ENCODE measurements at regions of chr10 and their contacts with region 1.

Region 1: DNA sequence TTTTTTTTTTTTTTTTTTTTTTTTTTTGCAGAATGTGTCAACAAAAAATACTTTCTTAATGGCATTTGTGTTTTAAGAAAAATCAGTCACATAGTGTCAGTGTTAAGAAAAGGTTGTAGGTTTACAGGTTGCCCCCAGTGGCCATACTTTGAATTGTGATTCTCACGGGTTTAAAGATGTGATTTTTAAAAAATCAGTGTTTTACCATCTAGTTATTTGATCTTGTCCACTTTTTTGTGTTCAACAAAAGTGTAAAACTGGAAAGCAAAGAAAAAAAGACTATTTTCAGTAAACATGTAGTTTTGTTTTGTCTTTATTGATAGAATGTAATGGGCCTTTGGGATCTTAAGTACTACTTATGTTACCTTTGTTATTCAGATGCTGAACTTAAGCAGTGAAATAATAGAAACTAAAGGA is 25.7 kb downstream of the SUV39H2 start:
- DNase-seq: peak; percentile 49
- ATAC-seq: peak; percentile 64
- H3K4me3 Mint-ChIP-seq: no peak overlapping the region
- H3K27ac Mint-ChIP-seq: no peak overlapping the region
- H3K4me1 Mint-ChIP-seq: peaks cover 7% of the 10 kb centered on the region
- H3K27me3 Mint-ChIP-seq: no peaks in the 10 kb centered on the region

Region 2: DNA sequence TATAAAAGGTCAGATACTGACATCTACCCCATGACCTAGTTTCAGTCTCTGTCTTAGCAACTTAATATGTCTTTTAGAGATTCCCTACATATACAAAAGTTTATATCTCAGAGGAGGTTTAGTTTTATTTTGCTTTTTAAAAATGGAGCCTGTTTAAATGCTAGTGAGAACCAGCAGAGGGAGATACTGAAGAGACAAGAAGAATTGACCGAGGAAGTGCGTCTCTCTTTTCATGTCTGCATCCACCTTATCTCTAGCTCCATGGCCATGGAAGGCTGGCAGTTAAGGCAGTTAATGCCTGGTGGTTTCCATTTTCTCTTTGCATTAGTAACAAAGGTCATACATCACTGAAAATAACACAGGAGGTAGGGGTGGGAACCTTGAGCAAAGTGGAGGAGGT is 15.0 kb before region 1 on chr10:
- CTCF ChIA-PET with region 1: interaction called, 21 read pairs
- POLR2A ChIA-PET with region 1: interaction called, 3 read pairs
- DNase-seq: no peak
- ATAC-seq: peak; percentile 44
- H3K4me3 Mint-ChIP-seq: no peak overlapping the region
- H3K27ac Mint-ChIP-seq: no peak overlapping the region
- H3K4me1 Mint-ChIP-seq: peaks cover 12% of the 10 kb centered on the region
- H3K27me3 Mint-ChIP-seq: no peaks in the 10 kb centered on the region

Region 3: GRCh38 chr10:14971867-14972448 is 67.6 kb after region 1 on chr10:
- CTCF ChIA-PET with region 1: interaction called, 11 read pairs
- POLR2A ChIA-PET with region 1: no interaction called
- DNase-seq: peak; percentile 62
- ATAC-seq: peak; percentile 64
- H3K4me3 Mint-ChIP-seq: no peak overlapping the region
- H3K27ac Mint-ChIP-seq: no peak overlapping the region
- H3K4me1 Mint-ChIP-seq: peaks cover 8% of the 10 kb centered on the region
- H3K27me3 Mint-ChIP-seq: peaks cover 7% of the 10 kb centered on the region

Region 4: GRCh38 chr10:15088428-15089261 is 184.3 kb after region 1 on chr10 and contains the start of gene ACBD7:
- CTCF ChIA-PET with region 1: no interaction called
- POLR2A ChIA-PET with region 1: no interaction called
- DNase-seq: peak; percentile 86
- ATAC-seq: peak; percentile 99
- H3K4me3 Mint-ChIP-seq: peak within 1 kb of the TSS; percentile 68
- H3K27ac Mint-ChIP-seq: no peak within 1 kb of the TSS
- H3K4me1 Mint-ChIP-seq: peaks cover 4% of the 10 kb centered on the region
- H3K27me3 Mint-ChIP-seq: peaks cover 4% of the 10 kb centered on the region
- total RNA-seq, gene ACBD7: 4.4 to 5.2 TPM

Measured in activated CD8-positive, alpha-beta T cell treated with anti-CD3 and anti-CD28 coated beads, Interleukin-2, amount 10 ng/mL, durations not matched to agents 7 days and 5 days (primary cell).